Naive thymus-derived CD4-positive, alpha-beta T cell (primary cell): ENCODE measurements at regions of chr13 and their contacts with region 1.

Region 1: GRCh38 chr13:79393564-79394249 is 12.3 kb downstream of the RBM26 start:
- DNase-seq: peak in 7 of 9 donors; percentile 61 to 77 (median 68)
- ATAC-seq: peak; percentile 86
- H3K4me3 ChIP-seq: peak overlapping the region; percentile 60
- H3K4me3 Mint-ChIP-seq: peak overlapping the region; percentile 74 to 86 (median 84)
- H3K27ac ChIP-seq: peak overlapping the region; percentile 70
- H3K27ac Mint-ChIP-seq: peak overlapping the region; percentile 67 to 97 (median 91)
- H3K4me1 ChIP-seq: peaks cover 24 to 47% of the 10 kb centered on the region in 2 donors
- H3K4me1 Mint-ChIP-seq: peaks cover 41 to 76% (median 70%) of the 10 kb centered on the region in 7 donors
- H3K27me3 ChIP-seq: no peaks in the 10 kb centered on the region
- H3K27me3 Mint-ChIP-seq: no peaks in the 10 kb centered on the region

Region 2: DNA sequence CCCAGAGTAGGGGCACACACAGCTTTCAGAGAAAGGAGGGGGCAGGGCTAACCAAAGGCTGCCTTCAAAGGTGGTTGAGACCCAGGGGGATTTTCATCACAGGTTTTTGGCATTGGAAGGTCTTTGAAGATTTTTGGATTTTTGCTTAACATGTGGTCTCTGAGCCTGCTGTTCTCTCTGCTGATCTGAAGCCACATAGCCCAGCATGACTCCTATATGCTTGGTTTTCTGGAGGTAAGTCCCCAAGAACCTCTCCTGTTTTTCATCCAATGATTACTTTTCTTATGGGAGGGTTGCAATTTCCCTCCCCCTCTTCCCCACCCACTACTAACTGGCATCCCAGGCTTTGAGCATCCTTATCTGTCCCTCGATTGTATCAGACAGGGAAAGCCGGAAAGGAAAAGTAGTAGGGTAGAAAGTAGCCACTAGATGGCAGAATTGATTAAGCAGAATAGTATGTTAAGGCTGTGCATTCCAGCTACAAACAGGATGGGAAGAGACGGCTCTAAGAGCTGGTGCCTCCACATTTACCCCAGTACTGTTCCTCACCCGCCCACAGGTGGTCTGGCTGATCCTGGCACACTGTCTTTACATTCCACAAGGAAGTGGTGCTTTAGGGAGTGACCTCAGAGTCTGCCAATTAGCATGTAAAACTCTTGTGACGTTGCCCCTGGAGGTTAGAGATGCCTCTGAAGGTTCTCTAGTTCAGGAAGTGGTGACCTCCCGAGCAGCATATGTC is 1256.1 kb before region 1 on chr13:
- CTCF ChIA-PET with region 1: interaction called, 4 read pairs
- POLR2A ChIA-PET with region 1: no interaction called
- intact Hi-C with region 1: loop called in 1 of 2 experiments (anchors 10 kb)
- DNase-seq: peak in 7 of 9 donors; percentile 7 to 41 (median 28)
- ATAC-seq: peak; percentile 76
- H3K4me3 ChIP-seq: no peak overlapping the region
- H3K4me3 Mint-ChIP-seq: peak overlapping the region in 9 of 10 donors; percentile 11 to 67 (median 42)
- H3K27ac ChIP-seq: no peak overlapping the region
- H3K27ac Mint-ChIP-seq: no peak overlapping the region
- H3K4me1 ChIP-seq: no peaks in the 10 kb centered on the region
- H3K4me1 Mint-ChIP-seq: peaks cover 3 to 7% (median 6%) of the 10 kb centered on the region in 7 donors
- H3K27me3 ChIP-seq: no peaks in the 10 kb centered on the region
- H3K27me3 Mint-ChIP-seq: peaks cover 0 to 4% (median 0%) of the 10 kb centered on the region in 5 donors

Region 3: DNA sequence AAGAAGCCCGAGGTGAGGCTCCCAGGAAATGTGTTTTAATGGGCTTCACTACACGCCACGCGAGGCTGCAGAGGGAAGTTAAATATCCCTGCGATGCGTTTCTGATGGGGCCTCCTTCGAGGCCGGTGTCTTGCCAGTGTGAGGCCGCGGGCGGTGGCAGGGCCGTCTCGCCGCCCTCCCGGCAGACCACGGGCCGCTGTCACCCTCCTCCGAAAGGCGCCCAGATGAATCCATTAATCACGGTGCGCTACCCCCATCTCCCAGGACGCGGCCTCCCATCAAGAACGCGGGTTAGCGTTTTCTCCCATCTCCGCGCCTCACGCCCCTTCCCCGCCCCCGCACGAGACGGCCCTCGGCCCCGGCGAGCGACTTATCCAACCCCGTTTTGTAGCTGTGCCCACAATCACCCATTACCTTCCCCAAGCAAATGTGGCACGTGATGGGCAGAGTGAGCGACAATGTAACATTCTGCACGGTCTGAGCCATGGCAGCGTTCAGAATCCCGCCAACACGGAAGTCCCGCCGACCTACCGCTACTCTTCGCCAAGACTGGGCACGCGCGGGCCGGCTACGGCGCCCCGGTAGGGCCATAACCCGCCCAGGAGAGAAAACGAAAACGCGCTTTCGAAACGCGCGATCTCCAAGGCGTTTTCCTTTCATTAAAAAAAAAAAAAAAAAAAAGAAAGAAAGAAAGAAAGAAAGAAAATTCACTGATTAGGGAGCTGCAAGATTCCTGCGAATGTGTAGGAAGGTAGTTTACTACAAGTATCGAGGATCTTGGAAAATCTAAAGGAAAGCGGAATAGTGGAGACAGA is 734.9 kb before region 1 on chr13 and contains the start of gene OBI1:
- CTCF ChIA-PET with region 1: no interaction called
- POLR2A ChIA-PET with region 1: no interaction called
- intact Hi-C with region 1: loop called in 1 of 2 experiments (anchors 5 kb)
- DNase-seq: peak; percentile 84 to 94 (median 90)
- ATAC-seq: peak; percentile 99
- H3K4me3 ChIP-seq: peak within 1 kb of the TSS; percentile 94
- H3K4me3 Mint-ChIP-seq: peak within 1 kb of the TSS; percentile 91 to 100 (median 98)
- H3K27ac ChIP-seq: peak within 1 kb of the TSS; percentile 71
- H3K27ac Mint-ChIP-seq: peak within 1 kb of the TSS; percentile 91 to 98 (median 95)
- H3K4me1 ChIP-seq: peaks cover 10 to 11% of the 10 kb centered on the region in 2 donors
- H3K4me1 Mint-ChIP-seq: peaks cover 22 to 55% (median 47%) of the 10 kb centered on the region in 7 donors
- H3K27me3 ChIP-seq: no peaks in the 10 kb centered on the region
- H3K27me3 Mint-ChIP-seq: no peaks in the 10 kb centered on the region
- total RNA-seq, gene OBI1: 4.2 to 17.7 (median 15.9) TPM

Region 4: GRCh38 chr13:79194272-79194671 is 199.4 kb before region 1 on chr13:
- CTCF ChIA-PET with region 1: no interaction called
- POLR2A ChIA-PET with region 1: no interaction called
- intact Hi-C with region 1: loop called in 1 of 2 experiments (anchors 5 kb)
- DNase-seq: peak in 8 of 9 donors; percentile 14 to 59 (median 46)
- ATAC-seq: peak; percentile 89
- H3K4me3 ChIP-seq: no peak overlapping the region
- H3K4me3 Mint-ChIP-seq: peak overlapping the region in 2 of 10 donors; percentile 21 to 61
- H3K27ac ChIP-seq: no peak overlapping the region
- H3K27ac Mint-ChIP-seq: peak overlapping the region in 1 of 9 donors; percentile 24
- H3K4me1 ChIP-seq: peaks cover 9 to 11% of the 10 kb centered on the region in 2 donors
- H3K4me1 Mint-ChIP-seq: peaks cover 6 to 53% (median 21%) of the 10 kb centered on the region in 7 donors
- H3K27me3 ChIP-seq: no peaks in the 10 kb centered on the region
- H3K27me3 Mint-ChIP-seq: peaks cover 0 to 21% (median 0%) of the 10 kb centered on the region in 5 donors

Region 5: GRCh38 chr13:79382545-79383289 is 11.0 kb before region 1 on chr13:
- CTCF ChIA-PET with region 1: interaction called, 4 read pairs
- POLR2A ChIA-PET with region 1: interaction called, 6 read pairs
- intact Hi-C with region 1: loop called (anchors 1 kb)
- DNase-seq: no peak
- ATAC-seq: peak; percentile 57
- H3K4me3 ChIP-seq: peak overlapping the region; percentile 11
- H3K4me3 Mint-ChIP-seq: peak overlapping the region in 9 of 10 donors; percentile 36 to 74 (median 65)
- H3K27ac ChIP-seq: no peak overlapping the region
- H3K27ac Mint-ChIP-seq: peak overlapping the region in 8 of 9 donors; percentile 9 to 81 (median 62)
- H3K4me1 ChIP-seq: peaks cover 16 to 28% of the 10 kb centered on the region in 2 donors
- H3K4me1 Mint-ChIP-seq: peaks cover 41 to 86% (median 76%) of the 10 kb centered on the region in 7 donors
- H3K27me3 ChIP-seq: no peaks in the 10 kb centered on the region
- H3K27me3 Mint-ChIP-seq: no peaks in the 10 kb centered on the region

Region 6: GRCh38 chr13:79423801-79424642 is 30.3 kb after region 1 on chr13:
- CTCF ChIA-PET with region 1: interaction called, 13 read pairs
- POLR2A ChIA-PET with region 1: no interaction called
- intact Hi-C with region 1: no loop called
- DNase-seq: peak in 5 of 9 donors; percentile 33 to 53 (median 37)
- ATAC-seq: peak; percentile 76
- H3K4me3 ChIP-seq: no peak overlapping the region
- H3K4me3 Mint-ChIP-seq: no peak overlapping the region
- H3K27ac ChIP-seq: no peak overlapping the region
- H3K27ac Mint-ChIP-seq: no peak overlapping the region
- H3K4me1 ChIP-seq: no peaks in the 10 kb centered on the region
- H3K4me1 Mint-ChIP-seq: peaks cover 0 to 16% (median 0%) of the 10 kb centered on the region in 7 donors
- H3K27me3 ChIP-seq: no peaks in the 10 kb centered on the region
- H3K27me3 Mint-ChIP-seq: no peaks in the 10 kb centered on the region

Region 7: DNA sequence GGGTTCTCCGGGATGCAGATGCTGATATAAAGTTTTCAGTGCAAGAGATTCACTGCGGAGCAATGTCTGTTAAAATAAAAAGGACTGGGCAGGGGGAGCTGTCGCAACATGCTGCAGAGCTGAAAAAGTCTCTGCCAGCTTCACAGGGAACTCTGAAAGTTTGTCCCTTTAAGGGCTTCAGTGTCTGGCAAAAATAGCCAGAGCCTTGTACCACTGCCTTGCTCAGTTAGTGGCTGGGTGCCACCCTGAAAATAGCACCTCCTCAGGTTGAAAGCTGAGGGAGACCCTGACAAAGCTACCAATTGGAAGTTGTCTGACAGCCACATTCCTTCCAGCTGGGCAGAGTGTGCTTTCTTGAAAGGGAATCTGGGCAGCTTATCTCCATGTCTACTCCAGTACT is 84.3 kb after region 1 on chr13:
- CTCF ChIA-PET with region 1: no interaction called
- POLR2A ChIA-PET with region 1: no interaction called
- intact Hi-C with region 1: no loop called
- DNase-seq: no peak
- ATAC-seq: no peak
- H3K4me3 ChIP-seq: no peak overlapping the region
- H3K4me3 Mint-ChIP-seq: no peak overlapping the region
- H3K27ac ChIP-seq: no peak overlapping the region
- H3K27ac Mint-ChIP-seq: peak overlapping the region in 1 of 9 donors; percentile 23
- H3K4me1 ChIP-seq: peaks cover 6 to 12% of the 10 kb centered on the region in 2 donors
- H3K4me1 Mint-ChIP-seq: peaks cover 8 to 38% (median 30%) of the 10 kb centered on the region in 7 donors
- H3K27me3 ChIP-seq: no peaks in the 10 kb centered on the region
- H3K27me3 Mint-ChIP-seq: peaks cover 0 to 9% (median 0%) of the 10 kb centered on the region in 5 donors